ENCODE measurements at regions of chr6 and their contacts with region 1.

Region 1: GRCh38 chr6:86856937-86857563 is 80.3 kb upstream of the HTR1E start:
- DNase-seq: peak; percentile 3 to 56
- H3K4me3 ChIP-seq: no peak overlapping the region
- H3K27ac ChIP-seq: no peak overlapping the region
- H3K4me1 ChIP-seq: no peaks in the 10 kb centered on the region
- H3K27me3 ChIP-seq: no peaks in the 10 kb centered on the region
- CTCF ChIP-seq: peak in 2 of 3 experiments; percentile 48 to 67; a peak in 2 of 4 replicates
- EP300 ChIP-seq: no peak
- POLR2A ChIP-seq: no peak
- RAD21 ChIP-seq: peak; percentile 70 to 75

Region 2: DNA sequence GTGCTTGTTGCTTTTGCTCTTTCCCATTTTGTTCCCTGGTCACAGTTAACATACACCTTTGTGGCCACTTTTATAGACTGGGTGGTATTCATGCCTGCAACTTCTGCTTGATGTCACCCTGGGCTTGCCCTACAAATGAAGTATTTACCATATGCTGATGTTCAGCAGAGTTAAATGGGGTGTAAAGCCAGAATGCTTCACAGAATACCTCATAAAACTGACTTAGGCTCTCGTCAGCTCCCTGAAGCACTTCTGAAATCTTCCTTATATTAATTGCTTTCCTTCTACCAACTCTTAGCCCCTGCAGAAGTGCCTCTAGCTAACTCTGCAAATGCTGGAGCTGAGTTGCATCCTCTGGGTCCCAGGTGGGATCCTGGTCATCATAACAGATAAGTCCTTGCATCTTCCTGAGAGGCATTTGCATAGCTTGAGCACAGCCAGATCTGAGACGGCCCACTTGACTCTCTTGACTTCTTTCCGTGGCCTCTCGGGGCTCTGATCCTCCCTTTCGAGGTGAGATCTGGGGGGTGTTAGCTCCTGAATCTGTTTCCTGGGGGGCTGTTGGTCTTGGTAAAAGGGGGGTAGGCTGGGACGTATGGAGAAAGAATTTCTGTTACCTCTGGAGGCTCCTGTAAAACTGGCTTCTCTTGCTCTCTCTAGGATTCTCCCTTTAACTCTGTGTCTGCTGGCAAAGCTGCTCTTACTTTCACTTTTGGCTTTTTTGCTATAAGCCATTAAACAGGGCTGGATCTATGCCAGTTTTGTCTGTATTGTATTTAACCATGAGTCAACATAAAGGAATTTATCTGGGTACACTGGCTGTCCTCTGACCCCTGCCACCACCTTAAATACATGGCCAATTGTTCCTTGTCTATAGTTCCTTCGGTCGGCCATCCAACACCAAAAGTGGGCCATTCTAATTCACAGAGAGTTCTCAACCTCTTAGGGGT is 991.4 kb before region 1 on chr6:
- CTCF ChIA-PET with region 1: no interaction called
- POLR2A ChIA-PET with region 1: no interaction called
- DNase-seq: no peak
- H3K4me3 ChIP-seq: no peak overlapping the region
- H3K27ac ChIP-seq: no peak overlapping the region
- H3K4me1 ChIP-seq: peaks cover 0 to 10% (median under 1%) of the 10 kb centered on the region in 4 experiments; a peak in 5 of 7 replicates
- H3K27me3 ChIP-seq: no peaks in the 10 kb centered on the region
- CTCF ChIP-seq: no peak
- EP300 ChIP-seq: no peak
- POLR2A ChIP-seq: no peak
- RAD21 ChIP-seq: no peak

Region 3: DNA sequence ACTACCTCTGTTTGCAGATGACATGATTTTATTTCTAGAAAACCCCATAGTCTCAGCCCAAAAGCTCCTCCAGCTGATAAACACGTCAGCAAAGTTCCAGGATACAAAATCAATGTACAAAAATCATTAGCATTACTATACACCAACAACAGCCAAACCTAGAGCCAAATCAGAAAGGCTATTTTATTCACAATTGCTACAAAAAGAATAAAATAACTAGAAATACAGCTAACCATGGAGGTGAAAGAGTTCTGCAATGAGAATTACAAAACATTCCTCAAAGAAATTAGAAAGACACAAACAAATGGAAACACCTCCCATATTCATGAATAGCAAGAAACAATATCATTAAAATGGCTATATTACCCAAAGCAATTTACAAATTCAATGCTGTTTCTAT is 14.6 kb after region 1 on chr6:
- CTCF ChIA-PET with region 1: interaction called, 14 read pairs
- POLR2A ChIA-PET with region 1: no interaction called
- DNase-seq: no peak
- H3K4me3 ChIP-seq: no peak overlapping the region
- H3K27ac ChIP-seq: no peak overlapping the region
- H3K4me1 ChIP-seq: no peaks in the 10 kb centered on the region
- H3K27me3 ChIP-seq: no peaks in the 10 kb centered on the region
- CTCF ChIP-seq: no peak
- EP300 ChIP-seq: no peak
- POLR2A ChIP-seq: no peak
- RAD21 ChIP-seq: no peak

Region 4: GRCh38 chr6:86937219-86938079 is 80.4 kb after region 1 on chr6 and contains the start of gene HTR1E:
- CTCF ChIA-PET with region 1: interaction called, 43 read pairs
- POLR2A ChIA-PET with region 1: interaction called, 3 read pairs
- DNase-seq: peak in 1 of 2 experiments; percentile 90
- H3K4me3 ChIP-seq: peak within 1 kb of the TSS; percentile 41 to 73 (median 66)
- H3K27ac ChIP-seq: no peak within 1 kb of the TSS
- H3K4me1 ChIP-seq: peaks cover 0 to 6% (median under 1%) of the 10 kb centered on the region in 4 experiments; a peak in 5 of 7 replicates
- H3K27me3 ChIP-seq: peaks cover 4 to 18% (median 17%) of the 10 kb centered on the region in 4 experiments
- CTCF ChIP-seq: peak; percentile 74 to 95 (median 87)
- EP300 ChIP-seq: no peak
- POLR2A ChIP-seq: no peak
- RAD21 ChIP-seq: peak; percentile 93 to 95; a peak in 3 of 4 replicates
- total RNA-seq, gene HTR1E: not detected in 2 replicates

Measured in H1 (cell line).